Breast epithelium (tissue), 4 donors: ENCODE measurements at regions of chr3 and their contacts with region 1.

Region 1: GRCh38 chr3:111741181-111741580 is 117.9 kb upstream of the PHLDB2 start:
- DNase-seq: no peak
- H3K4me3 ChIP-seq: no peak overlapping the region
- H3K27ac ChIP-seq: no peak overlapping the region
- H3K4me1 ChIP-seq: peaks cover 0 to 5% of the 10 kb centered on the region in 2 donors
- H3K27me3 ChIP-seq: no peaks in the 10 kb centered on the region
- CTCF ChIP-seq: no peak
- POLR2A ChIP-seq: no peak

Region 2: DNA sequence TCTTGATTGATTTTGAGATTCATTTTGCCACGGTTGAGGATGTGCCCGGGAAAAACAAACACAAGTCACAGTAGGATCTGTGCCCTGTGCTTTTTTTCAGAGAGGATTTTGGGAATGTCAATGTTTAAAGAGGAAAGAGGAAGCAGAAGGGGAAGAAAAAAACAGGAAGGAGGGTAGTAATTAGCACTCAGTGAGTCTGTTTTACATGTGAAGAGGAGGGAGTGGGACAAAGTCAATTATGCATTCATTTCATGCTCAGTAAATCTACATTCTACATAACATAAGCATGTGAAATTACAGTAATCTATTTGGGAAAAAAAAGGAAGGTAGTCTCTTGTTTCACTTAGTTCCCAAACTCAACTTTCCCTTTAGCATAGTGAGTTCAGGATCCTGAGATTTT is 573.5 kb after region 1 on chr3:
- intact Hi-C with region 1: loop called (anchors 5 kb)
- DNase-seq: no peak
- H3K4me3 ChIP-seq: no peak overlapping the region
- H3K27ac ChIP-seq: no peak overlapping the region
- H3K4me1 ChIP-seq: no peaks in the 10 kb centered on the region
- H3K27me3 ChIP-seq: no peaks in the 10 kb centered on the region
- CTCF ChIP-seq: no peak
- POLR2A ChIP-seq: no peak